ENCODE measurements at regions of chr6 and their contacts with region 1.

Region 1: DNA sequence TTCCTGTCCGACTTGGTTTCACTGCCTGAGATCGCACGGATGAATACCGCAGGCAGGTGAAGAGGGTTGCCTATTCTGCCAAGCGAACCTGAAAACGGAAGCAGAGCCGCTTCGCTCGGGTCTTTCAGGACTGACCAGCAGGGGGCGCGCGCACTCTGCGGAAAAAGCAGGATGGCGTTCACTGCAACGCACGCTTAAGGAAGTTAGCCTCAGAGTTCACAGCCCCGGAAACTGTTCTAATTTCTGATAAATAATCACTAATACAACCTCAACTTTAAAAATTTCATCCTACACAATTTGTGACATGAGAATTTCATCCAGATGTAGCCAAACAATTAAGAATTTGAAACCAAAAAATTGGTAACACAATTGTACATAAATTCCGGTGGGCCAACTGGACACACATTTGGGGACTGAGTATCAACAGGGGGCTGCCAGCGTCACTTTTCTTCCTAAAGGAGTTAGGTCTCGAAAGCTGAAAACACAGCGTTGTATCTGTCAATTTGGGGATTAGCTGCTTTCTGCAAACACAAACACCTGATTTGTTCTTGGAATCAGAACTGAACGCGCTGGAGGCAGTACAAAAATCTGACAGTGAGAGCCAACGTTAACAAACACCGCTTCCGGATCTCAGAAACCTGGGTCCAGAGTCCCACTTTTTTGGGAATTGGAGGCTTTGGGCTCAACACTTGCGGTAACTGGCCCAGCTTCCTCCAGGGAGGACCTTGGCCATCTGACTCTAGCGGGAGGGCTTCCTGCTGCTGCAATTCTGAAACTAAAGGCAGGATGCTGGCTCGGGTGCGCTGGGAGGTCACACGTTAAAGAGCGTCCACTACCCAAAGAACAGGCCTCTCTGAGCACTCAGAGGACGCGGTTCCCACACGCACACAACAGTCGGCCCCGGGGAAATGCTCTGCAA is 8.8 kb downstream of the PXDC1 start:
- DNase-seq: peak; percentile 92
- H3K4me3 Mint-ChIP-seq: peak overlapping the region; percentile 40
- H3K27ac Mint-ChIP-seq: no peak overlapping the region
- H3K4me1 Mint-ChIP-seq: peaks cover 14% of the 10 kb centered on the region
- H3K27me3 Mint-ChIP-seq: peaks cover 13% of the 10 kb centered on the region

Region 2: GRCh38 chr6:3518356-3519225 is 224.1 kb before region 1 on chr6:
- CTCF ChIA-PET with region 1: no interaction called
- POLR2A ChIA-PET with region 1: no interaction called
- intact Hi-C with region 1: no loop called
- DNase-seq: no peak
- H3K4me3 Mint-ChIP-seq: no peak overlapping the region
- H3K27ac Mint-ChIP-seq: no peak overlapping the region
- H3K4me1 Mint-ChIP-seq: no peaks in the 10 kb centered on the region
- H3K27me3 Mint-ChIP-seq: peaks cover 14% of the 10 kb centered on the region

Region 3: GRCh38 chr6:3687847-3688246 is 54.8 kb before region 1 on chr6:
- CTCF ChIA-PET with region 1: no interaction called
- POLR2A ChIA-PET with region 1: no interaction called
- intact Hi-C with region 1: no loop called
- DNase-seq: no peak
- H3K4me3 Mint-ChIP-seq: no peak overlapping the region
- H3K27ac Mint-ChIP-seq: no peak overlapping the region
- H3K4me1 Mint-ChIP-seq: no peaks in the 10 kb centered on the region
- H3K27me3 Mint-ChIP-seq: peaks cover 6% of the 10 kb centered on the region

Region 4: DNA sequence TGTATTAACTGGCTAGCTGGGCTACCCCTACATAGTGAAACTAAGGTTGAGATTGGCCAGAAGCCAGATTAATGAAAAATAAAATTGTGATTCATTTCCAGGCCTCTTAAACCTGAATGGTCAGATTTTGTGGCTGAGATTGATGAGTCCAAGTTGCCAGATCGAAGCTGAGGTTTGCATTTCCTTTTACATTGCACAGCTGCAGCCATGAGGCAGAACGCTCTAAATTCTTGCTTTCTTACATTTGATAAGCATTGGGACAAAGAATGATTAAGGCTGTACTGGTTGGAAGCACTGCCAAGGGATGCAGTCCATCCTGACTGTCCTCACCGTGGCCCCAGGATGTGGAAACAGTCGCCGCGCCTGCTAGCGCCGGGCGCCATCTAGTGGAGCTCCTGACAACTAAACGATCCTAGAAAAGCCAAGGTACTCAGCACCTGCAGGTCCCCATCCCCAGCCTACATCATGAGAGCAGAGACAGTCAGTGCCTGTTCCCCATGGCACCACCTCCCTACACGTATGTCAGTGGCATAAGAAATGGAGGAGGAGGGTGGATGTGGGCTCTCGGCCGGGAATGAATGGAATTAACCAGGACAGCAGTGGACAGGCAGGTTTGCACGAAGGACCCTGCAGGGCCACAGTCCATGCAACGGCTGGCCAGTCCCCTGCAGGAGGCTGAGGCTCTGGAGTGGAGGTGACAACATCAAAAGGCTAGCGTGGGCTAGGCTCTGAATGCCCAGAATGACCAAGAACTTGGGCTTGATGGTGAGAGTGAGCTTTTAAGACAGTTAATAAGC is 10.1 kb before region 1 on chr6:
- CTCF ChIA-PET with region 1: interaction called, 17 read pairs
- POLR2A ChIA-PET with region 1: no interaction called
- intact Hi-C with region 1: no loop called
- DNase-seq: peak; percentile 74
- H3K4me3 Mint-ChIP-seq: no peak overlapping the region
- H3K27ac Mint-ChIP-seq: no peak overlapping the region
- H3K4me1 Mint-ChIP-seq: peaks cover 3% of the 10 kb centered on the region
- H3K27me3 Mint-ChIP-seq: peaks cover 8% of the 10 kb centered on the region

Region 5: GRCh38 chr6:3929281-3929798 is 186.7 kb after region 1 on chr6:
- CTCF ChIA-PET with region 1: interaction called, 56 read pairs
- POLR2A ChIA-PET with region 1: interaction called, 3 read pairs
- intact Hi-C with region 1: loop called (anchors 1 kb)
- DNase-seq: no peak
- H3K4me3 Mint-ChIP-seq: no peak overlapping the region
- H3K27ac Mint-ChIP-seq: no peak overlapping the region
- H3K4me1 Mint-ChIP-seq: no peaks in the 10 kb centered on the region
- H3K27me3 Mint-ChIP-seq: no peaks in the 10 kb centered on the region

Region 6: GRCh38 chr6:3990692-3991501 is 248.2 kb after region 1 on chr6:
- CTCF ChIA-PET with region 1: interaction called, 22 read pairs
- POLR2A ChIA-PET with region 1: no interaction called
- intact Hi-C with region 1: loop called (anchors 1 kb)
- DNase-seq: peak; percentile 81
- H3K4me3 Mint-ChIP-seq: no peak overlapping the region
- H3K27ac Mint-ChIP-seq: no peak overlapping the region
- H3K4me1 Mint-ChIP-seq: peaks cover 8% of the 10 kb centered on the region
- H3K27me3 Mint-ChIP-seq: no peaks in the 10 kb centered on the region

Region 7: GRCh38 chr6:4155848-4156466 is 413.3 kb after region 1 on chr6:
- CTCF ChIA-PET with region 1: interaction called, 5 read pairs
- POLR2A ChIA-PET with region 1: no interaction called
- intact Hi-C with region 1: loop called (anchors 2 kb)
- DNase-seq: peak; percentile 86
- H3K4me3 Mint-ChIP-seq: no peak overlapping the region
- H3K27ac Mint-ChIP-seq: no peak overlapping the region
- H3K4me1 Mint-ChIP-seq: peaks cover 4% of the 10 kb centered on the region
- H3K27me3 Mint-ChIP-seq: peaks cover 9% of the 10 kb centered on the region